HEK293T (cell line): ENCODE measurements at regions of chr12 and their contacts with region 1.

Region 1: DNA sequence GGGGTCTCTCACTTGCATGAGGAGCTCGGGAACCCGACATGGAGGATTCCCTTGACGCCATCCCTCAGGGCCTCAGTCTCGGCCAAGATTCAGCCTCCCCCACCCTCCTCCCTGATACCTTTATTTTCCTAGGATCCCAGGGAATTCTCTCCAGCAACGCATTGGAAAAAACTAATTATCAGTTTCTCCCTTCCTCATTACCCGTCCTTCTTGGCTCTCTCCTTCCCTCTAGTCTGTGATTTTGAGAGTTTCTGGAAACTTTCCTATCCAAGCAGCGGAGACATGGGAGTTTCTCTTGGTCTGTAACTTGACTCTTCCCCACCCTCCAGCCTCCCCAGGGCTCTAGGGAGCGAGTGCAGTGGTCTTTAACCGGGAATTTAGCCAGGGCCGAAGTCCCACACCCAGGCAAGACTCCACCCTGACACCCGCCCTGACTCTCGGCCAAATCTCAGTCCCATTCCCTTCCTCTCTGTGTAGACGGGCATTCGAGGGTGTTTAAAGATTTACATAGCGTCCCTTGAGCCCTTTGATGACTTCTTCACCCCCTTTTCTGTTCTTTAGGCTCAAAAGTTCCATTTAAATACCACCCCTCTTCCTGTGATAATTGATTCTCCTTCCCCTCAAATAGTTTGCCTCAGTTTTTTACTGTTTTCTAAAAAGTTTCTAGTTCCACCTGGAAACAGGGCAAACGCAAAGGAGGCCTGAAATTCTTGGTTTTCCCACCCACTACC is 6.7 kb downstream of the HOXC5 start:
- DNase-seq: no peak

Region 2: DNA sequence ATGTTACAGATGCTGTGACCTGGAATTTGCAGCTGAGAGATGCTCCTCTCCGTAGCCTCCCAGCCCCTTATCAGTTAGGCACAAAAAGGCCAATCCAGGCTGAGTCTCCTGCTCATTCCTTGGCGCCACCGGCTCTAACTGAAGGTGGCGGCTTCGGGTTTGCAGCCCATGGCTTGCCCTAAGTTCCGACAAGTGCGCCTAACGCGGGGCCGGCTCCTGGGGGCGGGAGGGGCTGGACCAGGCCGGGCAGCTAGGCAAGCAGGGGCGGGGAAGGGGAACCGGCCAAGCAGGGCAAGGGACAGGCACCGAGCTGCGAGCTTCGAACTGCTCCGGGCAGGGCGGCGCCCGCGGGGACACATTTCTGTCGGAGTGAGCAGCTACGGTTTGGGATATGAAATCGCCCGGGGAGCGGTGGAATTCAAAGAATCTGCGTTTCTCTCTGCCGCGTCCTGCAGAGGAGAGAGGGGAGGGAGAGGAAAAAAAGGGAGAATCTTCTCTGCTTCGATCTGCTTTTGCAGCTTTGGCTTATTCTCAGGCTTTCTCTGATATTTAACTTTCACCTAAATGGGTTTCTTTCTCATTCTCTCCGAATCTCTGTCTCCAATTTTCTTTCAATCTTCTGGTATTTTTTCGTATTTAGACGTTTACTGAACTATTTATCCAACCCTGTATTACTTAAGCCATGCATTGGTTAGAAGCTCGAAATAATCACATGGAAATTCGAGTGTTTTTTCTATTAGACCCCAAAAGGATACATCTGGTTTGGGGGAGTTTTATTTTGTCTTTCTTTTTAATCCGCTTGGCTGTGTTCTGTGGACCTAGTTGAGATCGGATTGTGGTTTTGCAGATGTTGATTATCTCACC is 86.5 kb before region 1 on chr12:
- CTCF ChIA-PET with region 1: no interaction called
- POLR2A ChIA-PET with region 1: no interaction called
- DNase-seq: peak; percentile 54

Region 3: GRCh38 chr12:54053751-54054741 is 14.5 kb after region 1 on chr12 and contains the start of gene HOXC4:
- CTCF ChIA-PET with region 1: interaction called, 13 read pairs
- POLR2A ChIA-PET with region 1: interaction called, 117 read pairs
- DNase-seq: peak; percentile 64

Region 4: DNA sequence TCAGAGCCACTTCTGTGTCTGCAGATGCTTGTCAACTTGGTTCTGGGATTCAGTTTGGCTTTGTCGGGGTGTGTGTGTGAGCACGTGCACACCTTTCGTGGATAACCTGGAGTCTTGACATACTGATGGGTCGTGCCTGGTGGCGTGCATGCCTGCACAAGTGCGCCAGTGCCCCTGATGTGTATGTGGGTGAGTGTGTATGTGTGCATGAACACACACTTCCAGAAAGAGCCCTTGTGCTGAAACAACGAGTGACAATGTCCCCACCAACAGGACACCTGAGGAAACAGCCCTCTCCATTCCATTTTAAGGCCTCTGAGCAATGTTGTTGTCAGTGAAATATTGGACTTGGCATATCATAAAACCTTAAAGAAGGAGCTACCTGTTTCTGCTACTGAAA is 95.3 kb after region 1 on chr12:
- CTCF ChIA-PET with region 1: interaction called, 11 read pairs
- POLR2A ChIA-PET with region 1: interaction called, 12 read pairs
- DNase-seq: no peak

Region 5: GRCh38 chr12:54509617-54510016 is 470.0 kb after region 1 on chr12:
- CTCF ChIA-PET with region 1: no interaction called
- POLR2A ChIA-PET with region 1: no interaction called
- DNase-seq: no peak